Activated CD8-positive, alpha-beta memory T cell treated with anti-CD3 and anti-CD28 coated beads, Interleukin-2, amount 10 ng/mL, durations not matched to agents 7 days and 5 days (primary cell): ENCODE measurements at regions of chr14 and their contacts with region 1.

Region 1: DNA sequence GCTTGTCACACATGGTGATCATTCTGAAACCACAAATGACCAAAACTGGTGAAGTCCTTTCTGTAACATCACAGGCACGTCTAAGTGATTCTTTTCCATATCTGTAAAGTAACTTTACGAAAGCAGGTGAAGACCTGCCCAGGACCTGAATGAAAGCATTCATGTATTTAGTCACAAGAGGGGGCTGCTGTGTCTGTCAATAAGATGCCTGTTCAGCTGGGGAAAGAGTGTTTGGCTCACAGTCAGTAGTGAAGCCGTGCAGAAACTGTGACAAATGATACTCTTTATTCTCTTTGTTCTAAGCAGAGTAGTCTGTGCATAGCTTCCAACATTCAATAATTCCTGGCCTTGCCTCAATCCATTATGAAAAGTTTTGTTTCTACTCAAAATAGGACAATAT is 373.5 kb upstream of the OR4E1 start:
- DNase-seq: peak; percentile 55
- ATAC-seq: peak; percentile 89
- H3K4me3 Mint-ChIP-seq: peak overlapping the region; percentile 36
- H3K27ac Mint-ChIP-seq: peak overlapping the region; percentile 78
- H3K4me1 Mint-ChIP-seq: peaks cover 38% of the 10 kb centered on the region
- H3K27me3 Mint-ChIP-seq: no peaks in the 10 kb centered on the region

Region 2: DNA sequence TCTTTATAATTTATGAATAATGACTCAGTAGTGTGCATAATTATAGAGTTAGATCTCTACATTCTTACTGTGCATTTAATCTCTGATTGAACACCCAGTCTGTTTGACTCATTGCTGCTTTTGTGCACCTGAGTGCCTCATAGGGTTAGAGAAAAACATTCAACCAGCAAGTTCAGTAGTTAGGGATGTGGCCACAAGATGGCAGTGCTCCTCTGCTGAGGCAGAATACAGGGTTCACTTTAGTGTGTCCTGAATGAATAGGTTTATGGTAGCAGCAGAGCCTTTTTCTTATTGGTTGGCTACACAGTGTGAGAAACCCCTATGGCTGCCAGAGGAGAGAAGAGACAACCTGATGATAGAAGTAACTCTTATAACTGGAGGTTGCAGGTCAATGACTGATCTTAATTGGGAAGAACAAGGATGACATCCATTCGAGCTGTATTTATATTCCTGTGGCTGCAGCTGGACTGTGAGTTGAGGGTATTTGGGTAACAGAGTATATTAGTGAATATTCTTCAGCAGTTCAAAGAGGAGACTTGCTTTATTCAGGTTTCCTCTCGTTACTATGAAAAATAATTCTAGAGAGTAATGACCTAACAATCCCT is 178.6 kb before region 1 on chr14:
- CTCF ChIA-PET with region 1: no interaction called
- DNase-seq: peak; percentile 88
- ATAC-seq: peak; percentile 92
- H3K4me3 Mint-ChIP-seq: peak overlapping the region; percentile 63
- H3K27ac Mint-ChIP-seq: peak overlapping the region; percentile 58
- H3K4me1 Mint-ChIP-seq: peaks cover 17% of the 10 kb centered on the region
- H3K27me3 Mint-ChIP-seq: no peaks in the 10 kb centered on the region

Region 3: DNA sequence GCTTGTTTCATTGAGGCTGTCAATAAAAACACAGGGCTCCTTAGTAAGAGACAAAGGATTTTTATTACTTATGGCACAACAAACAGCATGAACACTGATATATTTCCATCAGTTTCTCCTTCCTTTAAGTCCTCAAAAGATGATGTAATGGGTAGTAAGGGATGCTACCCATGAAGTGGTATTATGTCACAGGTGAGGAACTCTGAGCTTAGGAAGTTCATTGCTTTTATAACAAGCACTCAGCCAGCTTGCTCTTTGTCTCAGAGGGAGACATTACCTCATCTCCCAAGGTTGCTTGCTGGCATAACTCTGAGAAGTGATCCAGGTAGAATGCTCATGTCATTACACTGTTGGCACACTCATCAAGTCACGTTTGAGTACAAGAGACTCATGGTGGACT is 86.5 kb before region 1 on chr14:
- CTCF ChIA-PET with region 1: no interaction called
- DNase-seq: no peak
- ATAC-seq: no peak
- H3K4me3 Mint-ChIP-seq: no peak overlapping the region
- H3K27ac Mint-ChIP-seq: no peak overlapping the region
- H3K4me1 Mint-ChIP-seq: peaks cover 11% of the 10 kb centered on the region
- H3K27me3 Mint-ChIP-seq: peaks cover 5% of the 10 kb centered on the region

Region 4: DNA sequence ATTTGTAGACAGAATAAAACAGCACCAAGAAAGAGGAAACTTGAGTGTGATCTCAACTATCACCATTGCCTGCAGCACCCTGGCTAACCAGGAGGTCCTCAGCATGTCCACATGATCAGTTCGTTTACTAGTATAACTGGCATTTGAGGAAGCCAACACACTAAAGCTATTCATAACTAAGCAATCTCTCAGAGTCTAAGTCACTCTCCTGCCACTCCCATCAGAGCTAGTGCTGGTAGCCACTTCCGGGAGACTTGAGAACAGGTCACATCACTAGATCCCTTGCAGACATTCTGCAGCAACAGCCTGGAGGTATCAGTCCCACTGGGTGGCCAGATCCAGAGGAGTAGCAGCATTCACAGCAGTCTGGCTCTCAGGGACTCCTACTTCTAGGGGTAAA is 20.6 kb before region 1 on chr14:
- CTCF ChIA-PET with region 1: no interaction called
- DNase-seq: no peak
- ATAC-seq: peak; percentile 42
- H3K4me3 Mint-ChIP-seq: no peak overlapping the region
- H3K27ac Mint-ChIP-seq: peak overlapping the region; percentile 77
- H3K4me1 Mint-ChIP-seq: peaks cover 8% of the 10 kb centered on the region
- H3K27me3 Mint-ChIP-seq: peaks cover 2% of the 10 kb centered on the region

Region 5: DNA sequence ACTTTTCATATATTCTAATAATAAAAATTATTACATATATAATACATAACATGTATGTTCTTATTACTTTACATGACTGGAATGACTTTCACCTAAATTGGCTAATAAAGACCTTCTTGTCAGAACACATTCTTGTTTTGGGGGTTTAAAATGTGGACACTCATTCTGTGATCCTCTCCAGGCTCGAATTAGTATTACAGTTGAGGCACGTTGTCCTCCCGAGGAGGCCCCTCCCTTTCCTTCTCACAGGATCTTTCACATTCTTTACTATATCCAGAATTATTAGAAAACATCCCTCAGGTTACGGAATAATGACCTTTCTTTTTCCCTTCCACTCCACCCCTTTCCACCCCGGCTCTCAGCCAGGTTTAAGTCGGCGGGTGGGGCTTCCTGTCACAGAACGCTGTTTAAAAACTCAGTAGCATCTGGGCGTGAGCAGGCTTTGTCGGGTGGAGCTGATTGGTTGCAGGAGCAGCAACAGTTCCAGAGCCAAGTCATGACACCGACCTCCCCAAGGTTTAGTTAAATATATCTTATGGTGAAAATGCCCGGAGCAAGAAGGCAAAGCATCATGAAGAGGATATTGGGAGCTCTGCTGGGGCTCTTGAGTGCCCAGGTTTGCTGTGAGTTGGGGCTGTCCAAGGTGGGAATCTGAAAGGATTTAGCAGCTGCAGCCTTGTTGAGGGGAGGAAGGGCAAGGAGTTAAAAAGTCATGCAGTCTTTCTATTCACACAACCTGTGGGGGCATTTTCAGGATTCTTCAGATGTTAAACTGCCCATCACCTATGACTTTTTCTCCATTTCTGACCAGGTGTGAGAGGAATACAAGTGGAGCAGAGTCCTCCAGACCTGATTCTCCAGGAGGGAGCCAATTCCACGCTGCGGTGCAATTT is 23.2 kb after region 1 on chr14:
- CTCF ChIA-PET with region 1: interaction called, 10 read pairs
- DNase-seq: peak; percentile 74
- ATAC-seq: peak; percentile 93
- H3K4me3 Mint-ChIP-seq: peak overlapping the region; percentile 81
- H3K27ac Mint-ChIP-seq: peak overlapping the region; percentile 92
- H3K4me1 Mint-ChIP-seq: peaks cover 16% of the 10 kb centered on the region
- H3K27me3 Mint-ChIP-seq: no peaks in the 10 kb centered on the region